Esophagus muscularis mucosa (tissue), 4 donors: ENCODE measurements at regions of chr3 and their contacts with region 1.

Region 1: DNA sequence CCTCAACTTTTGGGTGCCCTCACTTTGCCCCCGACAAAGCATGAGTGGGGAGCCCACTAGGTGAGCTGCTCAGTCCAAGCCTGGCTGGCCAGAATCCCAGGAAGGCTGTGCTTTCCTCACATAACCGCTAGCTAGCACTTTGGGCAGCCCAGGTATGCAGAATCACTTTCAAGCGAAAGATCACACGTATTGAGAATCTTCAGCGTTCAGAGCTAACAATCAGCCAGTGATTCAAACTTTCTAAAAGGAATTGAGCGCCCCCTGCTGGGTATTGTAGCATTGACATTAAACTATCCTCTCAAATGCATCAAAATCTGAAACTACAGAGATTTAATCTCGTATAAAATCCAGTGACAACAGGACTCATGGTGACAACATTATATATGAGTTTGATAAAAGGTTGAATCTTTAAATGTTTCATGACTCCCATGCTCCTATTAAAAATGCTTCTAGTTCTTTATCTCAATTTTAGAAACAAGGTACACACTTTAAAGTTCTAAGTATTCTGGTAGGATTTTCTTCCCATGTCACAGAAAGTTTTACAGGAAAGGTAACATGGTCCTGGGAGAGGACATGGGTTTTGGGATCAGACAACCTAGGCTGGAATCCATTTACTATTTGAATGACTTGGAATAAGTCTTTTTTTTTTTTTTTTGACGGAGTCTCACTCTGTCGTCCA is 11.8 kb downstream of the ANAPC13 start:
- DNase-seq: peak; percentile 95
- H3K4me3 ChIP-seq: no peak overlapping the region
- H3K27ac ChIP-seq: no peak overlapping the region
- H3K4me1 ChIP-seq: peaks cover 17 to 26% (median 21%) of the 10 kb centered on the region in 4 donors
- H3K27me3 ChIP-seq: no peaks in the 10 kb centered on the region
- CTCF ChIP-seq: peak; percentile 78 to 84 (median 82)
- EP300 ChIP-seq: no peak
- POLR2A ChIP-seq: no peak

Region 2: GRCh38 chr3:134212906-134213665 is 260.9 kb before region 1 on chr3:
- intact Hi-C with region 1: loop called (anchors 2 kb)
- DNase-seq: peak; percentile 96
- H3K4me3 ChIP-seq: no peak overlapping the region
- H3K27ac ChIP-seq: no peak overlapping the region
- H3K4me1 ChIP-seq: peaks cover 3 to 38% (median 26%) of the 10 kb centered on the region in 4 donors
- H3K27me3 ChIP-seq: no peaks in the 10 kb centered on the region
- CTCF ChIP-seq: peak; percentile 87 to 98 (median 96)
- EP300 ChIP-seq: no peak
- POLR2A ChIP-seq: no peak

Region 3: DNA sequence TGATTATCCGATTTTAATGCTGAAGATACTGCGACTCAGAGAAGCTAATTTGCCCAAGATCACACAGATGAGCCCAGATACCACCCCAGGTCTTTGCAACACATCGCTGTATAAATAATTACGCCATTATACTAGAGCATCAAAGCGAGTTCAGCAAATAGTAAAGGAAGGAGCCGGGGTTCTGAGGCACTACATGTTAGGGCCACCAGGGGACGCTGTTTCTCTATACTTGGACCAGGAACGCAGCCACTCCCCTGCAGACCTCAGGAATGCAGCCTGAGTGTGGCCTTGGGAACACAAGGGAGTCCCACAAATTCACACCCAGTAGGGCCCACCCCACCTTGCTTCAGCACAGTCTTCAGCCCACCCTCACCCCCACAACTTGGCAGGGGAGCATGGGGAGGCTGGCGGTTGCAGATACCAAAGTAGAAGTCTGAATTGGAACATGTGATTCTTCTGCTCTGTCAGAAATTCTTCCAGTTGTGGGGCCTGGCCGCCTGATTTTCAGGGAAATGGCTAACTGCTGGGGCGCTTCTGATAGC is 165.6 kb before region 1 on chr3:
- intact Hi-C with region 1: loop called (anchors 2 kb)
- DNase-seq: peak; percentile 97
- H3K4me3 ChIP-seq: peak overlapping the region; percentile 10 to 35 (median 16)
- H3K27ac ChIP-seq: peak overlapping the region; percentile 91 to 99 (median 92)
- H3K4me1 ChIP-seq: peaks cover 30 to 61% (median 54%) of the 10 kb centered on the region in 4 donors
- H3K27me3 ChIP-seq: no peaks in the 10 kb centered on the region
- CTCF ChIP-seq: peak; percentile 98 to 100 (median 100)
- EP300 ChIP-seq: no peak
- POLR2A ChIP-seq: no peak

Region 4: GRCh38 chr3:134378384-134378783 is 95.6 kb before region 1 on chr3:
- intact Hi-C with region 1: loop called (anchors 2 kb)
- DNase-seq: no peak
- H3K4me3 ChIP-seq: no peak overlapping the region
- H3K27ac ChIP-seq: no peak overlapping the region
- H3K4me1 ChIP-seq: peaks cover 20 to 35% (median 22%) of the 10 kb centered on the region in 4 donors
- H3K27me3 ChIP-seq: no peaks in the 10 kb centered on the region
- CTCF ChIP-seq: peak; percentile 52 to 62 (median 54)
- EP300 ChIP-seq: no peak
- POLR2A ChIP-seq: no peak